Naive thymus-derived CD4-positive, alpha-beta T cell (primary cell): ENCODE measurements at regions of chr3 and their contacts with region 1.

Region 1: GRCh38 chr3:189298469-189299375 is 127.0 kb downstream of the TPRG1 start:
- DNase-seq: peak in 3 of 9 donors; percentile 13 to 30 (median 14)
- ATAC-seq: no peak
- H3K4me3 ChIP-seq: no peak overlapping the region
- H3K4me3 Mint-ChIP-seq: peak overlapping the region in 9 of 10 donors; percentile 6 to 71 (median 51)
- H3K27ac ChIP-seq: no peak overlapping the region
- H3K27ac Mint-ChIP-seq: peak overlapping the region; percentile 16 to 85 (median 63)
- H3K4me1 ChIP-seq: peaks cover 0 to 13% of the 10 kb centered on the region in 2 donors
- H3K4me1 Mint-ChIP-seq: peaks cover 19 to 87% (median 59%) of the 10 kb centered on the region in 7 donors
- H3K27me3 ChIP-seq: no peaks in the 10 kb centered on the region
- H3K27me3 Mint-ChIP-seq: no peaks in the 10 kb centered on the region

Region 2: GRCh38 chr3:189276481-189277219 is 22.1 kb before region 1 on chr3:
- CTCF ChIA-PET with region 1: no interaction called
- POLR2A ChIA-PET with region 1: interaction called, 5 read pairs
- intact Hi-C with region 1: loop called in 1 of 2 experiments (anchors 2 kb)
- DNase-seq: no peak
- ATAC-seq: peak; percentile 57
- H3K4me3 ChIP-seq: no peak overlapping the region
- H3K4me3 Mint-ChIP-seq: peak overlapping the region in 6 of 10 donors; percentile 9 to 45 (median 26)
- H3K27ac ChIP-seq: no peak overlapping the region
- H3K27ac Mint-ChIP-seq: peak overlapping the region in 1 of 9 donors; percentile 26
- H3K4me1 ChIP-seq: peaks cover 0 to 27% of the 10 kb centered on the region in 2 donors
- H3K4me1 Mint-ChIP-seq: peaks cover 21 to 63% (median 46%) of the 10 kb centered on the region in 7 donors
- H3K27me3 ChIP-seq: no peaks in the 10 kb centered on the region
- H3K27me3 Mint-ChIP-seq: peaks cover 0 to 3% (median 0%) of the 10 kb centered on the region in 5 donors

Region 3: DNA sequence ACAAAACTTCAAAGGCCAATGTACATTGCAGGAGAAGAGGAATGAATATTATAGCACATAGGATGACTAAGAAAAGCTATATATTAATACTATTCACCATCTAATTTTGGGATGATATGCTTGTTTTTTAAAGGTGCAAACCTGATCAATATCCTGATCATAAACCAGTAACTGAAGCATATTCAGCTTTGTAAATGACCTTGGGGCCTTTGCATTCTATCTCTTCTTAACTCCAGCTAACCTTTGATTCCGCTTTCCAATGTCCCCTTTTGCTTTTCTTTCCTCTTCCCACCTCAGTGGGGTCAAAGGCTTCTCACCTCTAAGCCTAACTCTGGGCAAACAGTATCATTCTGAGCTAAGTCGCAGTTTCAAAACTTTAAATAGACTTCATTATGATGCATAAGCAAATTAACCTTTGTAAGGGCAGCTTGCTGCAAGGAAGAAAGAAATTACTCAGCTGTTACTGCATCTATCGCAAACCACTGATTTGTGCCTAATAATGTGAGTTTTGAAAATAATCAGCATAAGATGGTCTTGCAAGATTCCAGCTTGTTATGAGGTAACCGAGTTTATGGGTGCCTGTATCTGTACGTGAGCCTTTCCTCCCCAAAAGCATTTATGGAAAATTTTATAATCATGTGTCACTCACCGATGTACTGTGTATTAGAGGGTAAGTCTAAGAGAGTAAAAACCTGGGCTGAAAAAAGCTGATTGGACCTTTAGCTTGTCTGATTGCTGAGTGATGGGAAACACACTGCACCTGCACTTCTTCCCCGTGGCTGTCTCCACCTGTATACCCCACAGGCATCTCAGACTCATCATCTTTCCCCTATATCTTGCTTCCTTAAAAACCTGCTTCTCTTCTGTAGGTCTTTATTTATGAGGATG is 10.1 kb before region 1 on chr3:
- CTCF ChIA-PET with region 1: interaction called, 4 read pairs
- POLR2A ChIA-PET with region 1: interaction called, 5 read pairs
- intact Hi-C with region 1: loop called in 1 of 2 experiments (anchors 1 kb)
- DNase-seq: no peak
- ATAC-seq: no peak
- H3K4me3 ChIP-seq: no peak overlapping the region
- H3K4me3 Mint-ChIP-seq: peak overlapping the region in 5 of 10 donors; percentile 0 to 19 (median 12)
- H3K27ac ChIP-seq: no peak overlapping the region
- H3K27ac Mint-ChIP-seq: peak overlapping the region in 7 of 9 donors; percentile 3 to 53 (median 14)
- H3K4me1 ChIP-seq: peaks cover 6 to 22% of the 10 kb centered on the region in 2 donors
- H3K4me1 Mint-ChIP-seq: peaks cover 14 to 46% (median 36%) of the 10 kb centered on the region in 7 donors
- H3K27me3 ChIP-seq: no peaks in the 10 kb centered on the region
- H3K27me3 Mint-ChIP-seq: no peaks in the 10 kb centered on the region